Activated T-helper 2 cell treated with anti-CD3 and anti-CD28 coated beads, Interferon-gamma antibody, Interleukin-2, Interleukin-4, amounts not matched to agents 10 μg/mL and 5 μg/mL and 100 μg/mL, durations not matched to agents 14 hours and 24 hours and 36 hours (primary cell): ENCODE measurements at regions of chr19 and their contacts with region 1.

Region 1: DNA sequence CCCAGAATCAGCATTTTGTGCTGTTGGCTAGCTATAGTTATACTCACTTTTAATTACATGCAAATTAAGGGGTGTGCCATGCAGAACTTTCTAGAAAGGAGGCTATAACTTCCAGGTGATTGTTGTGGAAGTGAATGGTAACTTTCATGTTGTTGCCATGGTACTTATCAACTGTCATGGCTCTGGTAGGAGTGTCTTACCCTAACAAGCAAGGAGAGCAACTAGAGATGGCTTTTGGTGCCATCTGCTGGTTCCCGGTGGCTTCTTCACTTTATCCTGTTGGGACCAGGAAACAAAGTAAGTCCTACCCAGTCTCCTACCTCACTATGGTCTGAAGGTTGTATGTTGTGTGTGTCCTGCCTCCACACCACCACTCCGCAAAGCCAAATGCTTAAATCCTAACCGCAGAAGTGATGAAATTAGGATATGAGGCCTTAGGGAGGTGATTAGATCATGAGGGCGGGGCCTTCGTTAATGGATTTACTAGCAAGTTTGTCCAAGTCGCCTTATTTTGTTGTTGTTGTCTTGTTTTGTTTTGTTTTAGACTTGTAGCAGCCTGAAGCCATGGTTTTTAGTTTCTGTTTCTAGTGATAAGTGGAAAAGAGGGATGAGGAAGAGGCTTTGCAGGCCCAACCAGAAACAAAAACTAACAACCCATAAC is 22.6 kb downstream of the FBXL12 start:
- DNase-seq: peak; percentile 83
- H3K4me3 Mint-ChIP-seq: no peak overlapping the region
- H3K27ac Mint-ChIP-seq: peak overlapping the region; percentile 51
- H3K4me1 Mint-ChIP-seq: peaks cover 28% of the 10 kb centered on the region
- H3K27me3 Mint-ChIP-seq: no peaks in the 10 kb centered on the region

Region 2: GRCh38 chr19:9140159-9140874 is 655.9 kb before region 1 on chr19 and contains the start of gene ZNF317:
- intact Hi-C with region 1: loop called (anchors 1 kb)
- DNase-seq: peak; percentile 86
- H3K4me3 Mint-ChIP-seq: peak within 1 kb of the TSS; percentile 94
- H3K27ac Mint-ChIP-seq: peak within 1 kb of the TSS; percentile 95
- H3K4me1 Mint-ChIP-seq: peaks cover 17% of the 10 kb centered on the region
- H3K27me3 Mint-ChIP-seq: no peaks in the 10 kb centered on the region
- total RNA-seq, gene ZNF317: 44.2 and 50.0 TPM in 2 replicates

Region 3: DNA sequence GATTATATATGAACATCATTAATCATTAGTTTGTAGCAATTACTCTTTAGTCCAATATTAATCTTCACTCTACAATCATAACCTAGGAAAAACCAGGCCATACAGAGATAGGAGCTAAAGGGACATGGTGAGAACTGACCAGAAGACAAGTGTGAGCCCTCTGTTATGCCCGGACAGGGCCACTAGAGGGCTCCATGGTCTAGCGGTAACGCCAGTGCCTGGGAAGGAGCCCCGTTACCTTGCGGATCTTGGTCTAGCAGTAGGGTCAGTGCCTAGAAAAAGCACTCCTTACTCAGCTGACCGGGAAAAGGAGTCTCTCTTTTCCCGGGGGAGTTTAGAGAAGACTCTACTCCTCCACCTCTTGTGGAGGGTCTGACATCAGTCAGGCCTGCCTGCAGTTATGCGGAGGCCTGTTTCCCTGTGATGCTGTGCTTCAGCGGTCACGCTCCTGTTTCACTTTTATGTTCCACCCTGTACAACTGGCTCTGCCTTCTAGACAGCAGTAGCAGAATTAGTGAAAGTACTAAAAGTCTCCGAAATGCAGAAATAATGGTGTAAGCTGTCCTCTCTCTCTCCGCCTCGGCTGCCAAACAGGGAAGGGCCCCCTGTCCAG is 590.6 kb before region 1 on chr19:
- intact Hi-C with region 1: loop called (anchors 5 kb)
- DNase-seq: peak; percentile 51
- H3K4me3 Mint-ChIP-seq: peak overlapping the region; percentile 38
- H3K27ac Mint-ChIP-seq: no peak overlapping the region
- H3K4me1 Mint-ChIP-seq: peaks cover 2% of the 10 kb centered on the region
- H3K27me3 Mint-ChIP-seq: no peaks in the 10 kb centered on the region

Region 4: GRCh38 chr19:9309139-9309973 is 486.9 kb before region 1 on chr19 and contains the start of gene ZNF699:
- intact Hi-C with region 1: loop called (anchors 2 kb)
- DNase-seq: peak; percentile 98
- H3K4me3 Mint-ChIP-seq: peak within 1 kb of the TSS; percentile 79
- H3K27ac Mint-ChIP-seq: peak within 1 kb of the TSS; percentile 89
- H3K4me1 Mint-ChIP-seq: peaks cover 12% of the 10 kb centered on the region
- H3K27me3 Mint-ChIP-seq: no peaks in the 10 kb centered on the region
- total RNA-seq, gene ZNF699: 4.4 and 5.2 TPM in 2 replicates

Region 5: DNA sequence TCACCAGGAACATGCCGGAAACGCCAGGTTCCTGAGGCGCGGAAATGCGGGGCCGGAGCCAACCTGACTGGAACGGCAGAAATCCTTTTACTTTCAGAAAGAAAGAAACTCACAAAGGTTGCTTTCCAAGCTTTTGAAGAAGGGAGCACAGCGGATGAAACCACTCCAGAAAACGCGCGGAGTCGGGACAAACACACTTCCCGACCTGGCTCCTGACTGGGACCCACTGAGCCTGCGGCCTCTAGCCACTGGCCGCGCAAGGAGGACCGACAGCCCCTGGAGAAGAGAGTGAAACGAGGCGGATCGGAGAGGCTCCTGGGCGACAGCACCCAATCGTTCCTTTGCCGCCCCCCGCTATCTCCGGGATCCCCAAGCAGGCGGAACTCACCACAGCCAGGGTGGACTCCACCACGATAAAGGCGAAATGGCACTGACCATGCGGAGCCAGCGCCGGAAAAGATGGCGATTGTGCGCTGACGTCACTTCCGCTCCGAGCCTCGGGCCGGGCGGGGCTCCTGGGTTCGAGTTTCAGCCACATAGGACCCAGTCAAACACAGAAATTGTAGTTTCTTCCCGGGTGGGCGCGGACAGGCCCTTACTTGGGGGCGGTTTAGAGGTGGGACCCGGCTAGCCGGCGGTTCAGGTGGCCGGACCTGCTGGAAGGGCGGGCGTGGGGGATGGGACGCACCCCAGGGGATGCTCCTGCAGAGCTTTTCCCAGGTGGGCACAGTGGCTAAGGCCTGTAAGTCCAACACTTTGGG is 212.0 kb before region 1 on chr19 and contains the start of gene ZNF121:
- intact Hi-C with region 1: loop called (anchors 2 kb)
- DNase-seq: peak; percentile 77
- H3K4me3 Mint-ChIP-seq: peak within 1 kb of the TSS; percentile 91
- H3K27ac Mint-ChIP-seq: peak within 1 kb of the TSS; percentile 92
- H3K4me1 Mint-ChIP-seq: peaks cover 12% of the 10 kb centered on the region
- H3K27me3 Mint-ChIP-seq: peaks cover 2% of the 10 kb centered on the region
- total RNA-seq, gene ZNF121: 57.2 and 62.2 TPM in 2 replicates

Region 6: DNA sequence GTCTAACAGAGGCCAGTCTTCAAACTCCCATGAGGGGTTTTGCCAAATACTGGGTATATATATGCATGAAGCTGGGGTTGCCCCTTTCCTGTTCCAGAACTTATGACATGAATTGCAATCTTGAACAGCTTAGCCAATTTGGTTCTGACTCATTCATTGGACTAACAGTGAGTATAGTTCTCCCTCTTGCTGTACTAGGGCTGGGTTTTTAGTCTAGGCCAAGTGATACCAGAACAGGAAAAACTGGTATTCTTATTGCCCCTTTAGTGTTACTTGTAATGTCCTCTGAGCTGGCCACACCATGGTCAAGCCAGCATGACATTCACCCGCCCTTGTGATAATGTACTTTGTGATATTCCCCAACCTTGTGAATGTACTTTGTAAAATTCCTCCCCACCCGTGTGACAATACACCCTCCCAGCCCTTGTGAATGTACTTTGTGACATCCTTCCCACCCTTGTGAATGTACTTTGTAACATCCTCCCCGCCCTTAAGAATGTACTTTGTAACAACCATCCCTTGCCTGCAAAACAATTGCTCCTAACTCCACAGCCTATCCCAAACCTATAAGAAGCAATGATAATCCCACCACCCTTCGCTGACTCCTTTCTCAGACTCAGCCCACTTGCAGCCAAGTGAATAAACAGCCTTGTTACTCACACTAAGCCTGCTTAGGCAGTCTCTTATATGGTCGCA is 54.6 kb before region 1 on chr19:
- intact Hi-C with region 1: no loop called
- DNase-seq: no peak
- H3K4me3 Mint-ChIP-seq: no peak overlapping the region
- H3K27ac Mint-ChIP-seq: no peak overlapping the region
- H3K4me1 Mint-ChIP-seq: no peaks in the 10 kb centered on the region
- H3K27me3 Mint-ChIP-seq: no peaks in the 10 kb centered on the region

Region 7: GRCh38 chr19:9768175-9769112 is 27.8 kb before region 1 on chr19 and contains the start of gene ZNF846:
- intact Hi-C with region 1: loop called (anchors 1 kb)
- DNase-seq: peak; percentile 90
- H3K4me3 Mint-ChIP-seq: peak within 1 kb of the TSS; percentile 87
- H3K27ac Mint-ChIP-seq: peak within 1 kb of the TSS; percentile 95
- H3K4me1 Mint-ChIP-seq: peaks cover 8% of the 10 kb centered on the region
- H3K27me3 Mint-ChIP-seq: no peaks in the 10 kb centered on the region
- total RNA-seq, gene ZNF846: 3.2 and 3.7 TPM in 2 replicates

Region 8: DNA sequence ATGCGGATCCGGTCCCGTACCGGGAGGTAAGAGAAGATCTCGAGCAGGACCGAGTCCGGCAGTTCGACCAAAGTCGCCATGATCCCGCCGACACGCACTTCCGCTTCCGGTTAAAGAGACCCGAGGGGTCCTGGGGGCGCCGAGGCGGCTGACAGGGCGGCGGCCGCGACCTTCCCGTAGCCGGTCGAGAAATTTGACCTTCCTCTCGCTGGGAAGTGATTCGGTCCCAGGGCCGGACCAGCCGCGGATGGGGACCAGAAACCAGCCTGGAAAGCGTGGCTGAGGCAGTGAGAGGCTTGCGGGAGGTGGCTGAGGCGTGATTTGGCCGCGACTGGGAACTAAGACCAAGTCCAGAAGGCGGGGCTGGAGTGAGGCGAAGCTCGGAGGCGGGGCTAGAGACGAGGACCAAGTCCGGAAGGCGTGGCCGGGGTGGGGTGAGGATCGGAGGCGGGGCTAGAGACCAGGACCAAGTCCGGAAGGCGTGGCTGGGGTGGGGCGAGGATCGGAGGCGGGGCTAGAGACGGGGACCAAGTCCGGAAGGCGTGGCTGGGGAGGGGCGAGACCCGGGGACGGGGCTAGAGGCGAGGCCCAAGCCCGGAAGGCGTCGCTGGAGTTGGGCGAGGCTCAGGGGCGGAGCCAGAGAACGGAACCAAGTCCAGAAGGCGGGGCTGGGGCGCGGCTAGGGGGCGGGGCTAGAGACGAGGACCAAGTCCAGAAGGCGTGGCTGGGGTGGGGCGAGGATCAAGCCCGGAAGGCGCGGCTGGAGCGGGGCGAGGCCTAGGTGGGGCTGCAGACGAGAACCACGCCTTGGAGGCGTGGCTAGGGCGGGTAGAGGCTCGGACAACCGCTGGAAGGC is 22.7 kb after region 1 on chr19 and contains the start of gene FBXL12:
- intact Hi-C with region 1: loop called (anchors 1 kb)
- DNase-seq: peak; percentile 100
- H3K4me3 Mint-ChIP-seq: peak within 1 kb of the TSS; percentile 90
- H3K27ac Mint-ChIP-seq: peak within 1 kb of the TSS; percentile 87
- H3K4me1 Mint-ChIP-seq: peaks cover 21% of the 10 kb centered on the region
- H3K27me3 Mint-ChIP-seq: no peaks in the 10 kb centered on the region
- total RNA-seq, gene FBXL12: 23.4 and 23.7 TPM in 2 replicates